Common myeloid progenitor, CD34-positive (primary cell): ENCODE measurements at regions of chr1 and their contacts with region 1.

Region 1: GRCh38 chr1:160607011-160607671 is 27.8 kb upstream of the CD84 start:
- DNase-seq: peak; percentile 86 to 93 (median 92)
- H3K4me3 ChIP-seq: no peak overlapping the region
- H3K27ac ChIP-seq: no peak overlapping the region
- H3K4me1 ChIP-seq: peaks cover 0 to 18% (median 4%) of the 10 kb centered on the region in 4 experiments
- H3K27me3 ChIP-seq: no peaks in the 10 kb centered on the region

Region 2: GRCh38 chr1:160420881-160421842 is 186.0 kb before region 1 on chr1:
- CTCF ChIA-PET with region 1: interaction called, 11 read pairs
- POLR2A ChIA-PET with region 1: no interaction called
- DNase-seq: no peak
- H3K4me3 ChIP-seq: no peak overlapping the region
- H3K27ac ChIP-seq: no peak overlapping the region
- H3K4me1 ChIP-seq: no peaks in the 10 kb centered on the region
- H3K27me3 ChIP-seq: no peaks in the 10 kb centered on the region

Region 3: GRCh38 chr1:160539990-160540858 is 66.9 kb before region 1 on chr1:
- CTCF ChIA-PET with region 1: interaction called, 101 read pairs
- POLR2A ChIA-PET with region 1: interaction called, 3 read pairs
- DNase-seq: peak; percentile 99 to 100 (median 99)
- H3K4me3 ChIP-seq: peak overlapping the region in 5 of 7 experiments; percentile 5 to 59 (median 16)
- H3K27ac ChIP-seq: peak overlapping the region; percentile 62 to 91
- H3K4me1 ChIP-seq: peaks cover 31 to 52% (median 42%) of the 10 kb centered on the region in 4 experiments
- H3K27me3 ChIP-seq: no peaks in the 10 kb centered on the region

Region 4: DNA sequence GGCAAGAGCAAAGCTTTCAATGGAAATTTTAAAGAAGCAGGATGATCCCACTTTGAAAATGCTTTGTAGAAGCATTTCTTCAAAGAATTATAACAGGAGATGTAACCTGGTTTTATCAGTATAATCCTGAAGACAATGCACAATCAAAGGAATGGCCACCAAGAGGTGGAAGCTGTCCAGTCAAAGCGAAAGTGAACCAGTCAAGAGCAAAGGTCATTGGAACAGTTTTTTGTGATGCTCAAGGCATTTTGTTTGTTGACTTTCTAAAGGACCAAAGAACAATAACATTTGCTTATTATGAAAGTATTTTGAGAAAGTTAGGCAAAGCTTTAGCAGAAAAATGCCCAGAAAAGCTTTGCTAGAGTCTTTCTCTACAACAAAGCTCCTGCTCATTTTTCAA is 22.4 kb before region 1 on chr1:
- CTCF ChIA-PET with region 1: interaction called, 10 read pairs
- POLR2A ChIA-PET with region 1: no interaction called
- DNase-seq: no peak
- H3K4me3 ChIP-seq: no peak overlapping the region
- H3K27ac ChIP-seq: no peak overlapping the region
- H3K4me1 ChIP-seq: peaks cover 4 to 23% (median 7%) of the 10 kb centered on the region in 4 experiments
- H3K27me3 ChIP-seq: no peaks in the 10 kb centered on the region

Region 5: DNA sequence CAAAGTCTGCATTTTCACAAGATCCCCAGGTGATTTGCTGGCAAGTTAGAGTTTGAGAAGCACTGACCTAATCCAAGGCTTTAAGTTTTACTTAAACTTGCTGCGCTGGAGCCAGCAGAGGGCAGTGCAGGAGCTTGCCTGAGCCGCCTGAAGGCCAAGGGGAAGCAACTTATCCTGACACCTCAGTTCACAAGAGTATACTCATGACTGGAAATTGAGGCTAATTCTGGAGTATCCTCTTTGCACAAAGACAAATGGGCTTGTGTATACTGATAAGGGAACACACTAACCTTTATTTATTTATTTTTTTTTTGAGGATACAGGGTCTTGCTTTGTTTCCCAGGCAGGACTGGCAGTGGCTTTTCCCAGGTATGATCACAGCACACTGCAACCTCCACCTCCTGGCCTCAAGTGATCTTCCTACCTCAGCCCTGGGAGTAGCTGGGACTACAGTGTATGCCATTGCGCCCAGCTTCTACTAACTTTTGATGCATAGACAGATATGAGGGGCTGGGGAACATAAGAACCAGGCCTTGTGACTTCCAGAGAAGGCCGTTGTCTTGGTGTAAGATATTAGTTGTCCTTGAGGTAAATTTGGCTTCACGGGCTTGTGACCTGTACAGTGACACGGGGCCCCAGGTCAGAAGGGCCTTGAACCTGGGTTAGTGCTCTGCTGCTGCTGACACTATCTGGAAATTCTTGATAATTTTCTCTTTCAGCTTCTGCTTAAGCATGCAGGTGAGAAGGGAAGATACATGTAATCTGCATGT is 68.7 kb after region 1 on chr1:
- CTCF ChIA-PET with region 1: interaction called, 13 read pairs
- POLR2A ChIA-PET with region 1: no interaction called
- DNase-seq: peak; percentile 71 to 84 (median 80)
- H3K4me3 ChIP-seq: no peak overlapping the region
- H3K27ac ChIP-seq: no peak overlapping the region
- H3K4me1 ChIP-seq: peaks cover 0 to 29% (median 10%) of the 10 kb centered on the region in 4 experiments
- H3K27me3 ChIP-seq: no peaks in the 10 kb centered on the region